Endothelial cell of umbilical vein (primary cell): ENCODE measurements at regions of chr10 and their contacts with region 1.

Region 1: DNA sequence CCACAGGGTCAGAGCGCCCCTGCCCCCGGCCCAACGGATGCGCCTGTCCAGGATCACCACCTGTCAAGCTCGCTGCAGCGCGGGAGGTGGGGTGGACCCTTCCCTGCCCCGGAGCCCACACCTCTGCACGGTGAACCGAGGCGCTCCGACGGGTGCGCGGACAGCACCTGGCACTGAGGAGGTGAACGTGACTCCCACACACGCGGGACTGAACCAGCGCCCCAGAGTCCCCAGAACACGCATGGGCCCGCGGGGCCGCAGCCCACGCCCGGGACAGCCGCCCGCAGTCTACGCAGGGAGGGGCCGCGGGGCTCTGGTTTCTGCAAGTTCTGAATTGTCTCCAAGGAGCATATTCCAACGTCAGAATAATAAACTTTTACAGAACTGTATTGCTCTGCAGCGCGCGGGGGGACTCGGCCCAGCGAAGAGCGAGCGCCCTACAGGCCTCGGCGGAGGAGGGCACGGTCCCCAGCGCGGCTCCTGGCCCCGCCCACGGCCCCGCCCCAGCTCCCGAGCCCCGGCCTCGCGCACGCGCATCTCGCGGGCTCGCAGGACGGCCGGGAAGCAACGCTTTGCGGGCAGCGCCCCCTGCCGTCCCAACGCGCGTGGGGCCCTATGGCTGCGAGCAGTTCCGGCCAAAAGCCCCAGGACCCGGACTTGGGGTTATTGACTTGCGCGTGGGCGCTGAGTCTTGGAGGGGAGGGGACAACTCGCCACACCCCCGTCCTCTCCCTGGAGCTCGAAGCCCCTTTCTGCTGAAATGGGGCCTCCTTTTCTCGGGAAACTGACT is 29.7 kb downstream of the OAT start:
- DNase-seq: peak; percentile 83
- H3K4me3 ChIP-seq: peak overlapping the region; percentile 24 to 36 (median 29)
- H3K27ac ChIP-seq: no peak overlapping the region
- H3K4me1 ChIP-seq: no peaks in the 10 kb centered on the region
- H3K27me3 ChIP-seq: no peaks in the 10 kb centered on the region
- CTCF ChIP-seq: peak; percentile 89 to 95
- POLR2A ChIP-seq: no peak

Region 2: GRCh38 chr10:123967396-123968243 is 421.4 kb before region 1 on chr10:
- CTCF ChIA-PET with region 1: interaction called, 5 read pairs
- POLR2A ChIA-PET with region 1: no interaction called
- dilution Hi-C with region 1: no loop called
- intact Hi-C with region 1: loop called (anchors 1 kb)
- DNase-seq: peak; percentile 57
- H3K4me3 ChIP-seq: no peak overlapping the region
- H3K27ac ChIP-seq: no peak overlapping the region
- H3K4me1 ChIP-seq: no peaks in the 10 kb centered on the region
- H3K27me3 ChIP-seq: peaks cover 0 to 2% of the 10 kb centered on the region in 2 experiments
- CTCF ChIP-seq: peak; percentile 87 to 92
- POLR2A ChIP-seq: no peak

Region 3: GRCh38 chr10:124000792-124001201 is 388.2 kb before region 1 on chr10:
- CTCF ChIA-PET with region 1: interaction called, 691 read pairs
- POLR2A ChIA-PET with region 1: no interaction called
- dilution Hi-C with region 1: no loop called
- intact Hi-C with region 1: no loop called
- DNase-seq: no peak
- H3K4me3 ChIP-seq: no peak overlapping the region
- H3K27ac ChIP-seq: no peak overlapping the region
- H3K4me1 ChIP-seq: no peaks in the 10 kb centered on the region
- H3K27me3 ChIP-seq: no peaks in the 10 kb centered on the region
- CTCF ChIP-seq: no peak
- POLR2A ChIP-seq: no peak

Region 4: DNA sequence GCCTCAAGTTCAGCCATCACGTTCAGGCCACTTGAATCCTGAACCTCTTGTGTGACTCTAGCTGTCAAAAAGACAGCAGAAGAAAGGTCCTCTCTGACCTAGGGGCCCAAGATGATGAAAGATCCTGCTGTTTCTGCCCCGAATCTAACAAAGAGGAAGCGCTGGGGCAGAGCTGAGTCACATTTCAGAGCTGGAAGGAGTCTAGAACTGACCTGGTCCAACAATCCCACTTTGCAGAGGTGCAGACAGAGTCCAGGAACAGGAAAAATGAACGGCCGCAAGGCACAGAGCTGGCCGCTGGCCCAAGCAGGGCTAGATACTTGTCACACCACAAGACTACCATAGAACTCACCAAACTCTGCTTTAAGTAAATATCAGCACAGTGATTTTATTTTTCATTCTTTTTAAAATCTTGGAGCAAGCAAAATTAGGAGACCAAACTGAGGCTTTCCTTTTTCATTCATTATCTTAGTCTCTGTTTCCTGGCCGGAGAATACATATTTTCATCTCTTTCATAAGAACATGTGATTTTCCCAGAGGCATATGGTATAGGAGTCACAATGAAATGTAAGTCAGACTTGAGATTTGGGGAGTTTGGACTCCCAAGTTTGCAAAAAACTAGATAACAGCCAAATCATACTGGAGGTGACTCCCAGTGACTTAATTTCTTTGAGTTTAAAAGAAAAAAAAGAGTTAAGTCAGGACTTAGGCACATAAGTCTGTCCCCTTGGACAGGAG is 348.4 kb before region 1 on chr10:
- CTCF ChIA-PET with region 1: interaction called, 10 read pairs
- POLR2A ChIA-PET with region 1: no interaction called
- dilution Hi-C with region 1: no loop called
- intact Hi-C with region 1: no loop called
- DNase-seq: peak; percentile 27
- H3K4me3 ChIP-seq: no peak overlapping the region
- H3K27ac ChIP-seq: no peak overlapping the region
- H3K4me1 ChIP-seq: peaks cover 4% of the 10 kb centered on the region
- H3K27me3 ChIP-seq: no peaks in the 10 kb centered on the region
- CTCF ChIP-seq: no peak
- POLR2A ChIP-seq: no peak

Region 5: DNA sequence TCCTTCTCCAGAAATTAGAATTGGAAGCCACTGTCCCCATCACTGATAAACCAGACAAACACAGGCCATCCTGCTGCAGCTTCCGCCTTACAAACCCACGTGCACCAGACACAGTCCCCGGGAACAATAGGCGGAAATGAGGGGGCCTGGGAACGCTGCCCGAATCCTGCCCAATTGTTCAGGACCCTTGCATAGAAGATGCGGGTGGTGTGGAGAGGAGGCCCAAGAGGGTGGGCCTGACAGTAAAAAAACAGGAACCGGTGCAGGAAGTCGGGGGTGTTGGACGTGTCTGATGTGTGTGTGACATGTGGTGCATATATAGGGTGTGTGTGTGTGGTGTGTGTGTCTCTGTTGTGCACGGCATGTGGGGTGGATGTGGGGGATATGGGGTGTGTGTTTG is 269.1 kb before region 1 on chr10:
- CTCF ChIA-PET with region 1: interaction called, 7 read pairs
- POLR2A ChIA-PET with region 1: no interaction called
- dilution Hi-C with region 1: no loop called
- intact Hi-C with region 1: loop called (anchors 1 kb)
- DNase-seq: peak; percentile 98
- H3K4me3 ChIP-seq: no peak overlapping the region
- H3K27ac ChIP-seq: peak overlapping the region; percentile 87
- H3K4me1 ChIP-seq: peaks cover 21% of the 10 kb centered on the region
- H3K27me3 ChIP-seq: no peaks in the 10 kb centered on the region
- CTCF ChIP-seq: no peak
- POLR2A ChIP-seq: no peak

Region 6: DNA sequence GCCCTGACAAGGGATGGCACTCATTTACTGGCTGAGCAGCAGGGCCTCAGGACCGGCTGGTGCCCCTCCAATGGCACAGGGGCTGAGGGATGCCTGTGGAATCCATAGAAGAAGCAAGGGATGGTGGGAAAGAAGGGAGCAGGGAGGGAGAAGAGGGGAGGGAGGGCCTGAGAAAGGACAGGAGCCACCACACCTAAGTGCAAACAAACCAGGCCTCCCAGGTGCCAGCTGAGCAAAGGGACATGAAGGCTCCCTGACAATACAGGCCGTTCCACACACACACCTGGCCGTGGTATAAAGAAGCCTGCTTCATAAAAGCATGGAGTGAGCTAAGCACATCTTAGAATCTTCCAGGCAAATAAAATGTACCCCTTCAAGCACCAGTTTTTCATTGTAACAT is 24.4 kb before region 1 on chr10:
- CTCF ChIA-PET with region 1: interaction called, 16 read pairs
- POLR2A ChIA-PET with region 1: no interaction called
- dilution Hi-C with region 1: no loop called
- intact Hi-C with region 1: no loop called
- DNase-seq: no peak
- H3K4me3 ChIP-seq: no peak overlapping the region
- H3K27ac ChIP-seq: no peak overlapping the region
- H3K4me1 ChIP-seq: no peaks in the 10 kb centered on the region
- H3K27me3 ChIP-seq: no peaks in the 10 kb centered on the region
- CTCF ChIP-seq: no peak
- POLR2A ChIP-seq: no peak

Region 7: GRCh38 chr10:124403548-124403947 is 14.5 kb after region 1 on chr10:
- CTCF ChIA-PET with region 1: interaction called, 49 read pairs
- POLR2A ChIA-PET with region 1: no interaction called
- dilution Hi-C with region 1: no loop called
- intact Hi-C with region 1: no loop called
- DNase-seq: peak; percentile 85
- H3K4me3 ChIP-seq: no peak overlapping the region
- H3K27ac ChIP-seq: no peak overlapping the region
- H3K4me1 ChIP-seq: no peaks in the 10 kb centered on the region
- H3K27me3 ChIP-seq: no peaks in the 10 kb centered on the region
- CTCF ChIP-seq: peak; percentile 60 to 64
- POLR2A ChIP-seq: no peak

Region 8: GRCh38 chr10:125066704-125067447 is 677.9 kb after region 1 on chr10:
- CTCF ChIA-PET with region 1: no interaction called
- POLR2A ChIA-PET with region 1: no interaction called
- dilution Hi-C with region 1: no loop called
- intact Hi-C with region 1: no loop called
- DNase-seq: no peak
- H3K4me3 ChIP-seq: no peak overlapping the region
- H3K27ac ChIP-seq: no peak overlapping the region
- H3K4me1 ChIP-seq: peaks cover 8% of the 10 kb centered on the region
- H3K27me3 ChIP-seq: no peaks in the 10 kb centered on the region
- CTCF ChIP-seq: no peak
- POLR2A ChIP-seq: no peak